ENCODE measurements at regions of chr17 and their contacts with region 1.

Region 1: DNA sequence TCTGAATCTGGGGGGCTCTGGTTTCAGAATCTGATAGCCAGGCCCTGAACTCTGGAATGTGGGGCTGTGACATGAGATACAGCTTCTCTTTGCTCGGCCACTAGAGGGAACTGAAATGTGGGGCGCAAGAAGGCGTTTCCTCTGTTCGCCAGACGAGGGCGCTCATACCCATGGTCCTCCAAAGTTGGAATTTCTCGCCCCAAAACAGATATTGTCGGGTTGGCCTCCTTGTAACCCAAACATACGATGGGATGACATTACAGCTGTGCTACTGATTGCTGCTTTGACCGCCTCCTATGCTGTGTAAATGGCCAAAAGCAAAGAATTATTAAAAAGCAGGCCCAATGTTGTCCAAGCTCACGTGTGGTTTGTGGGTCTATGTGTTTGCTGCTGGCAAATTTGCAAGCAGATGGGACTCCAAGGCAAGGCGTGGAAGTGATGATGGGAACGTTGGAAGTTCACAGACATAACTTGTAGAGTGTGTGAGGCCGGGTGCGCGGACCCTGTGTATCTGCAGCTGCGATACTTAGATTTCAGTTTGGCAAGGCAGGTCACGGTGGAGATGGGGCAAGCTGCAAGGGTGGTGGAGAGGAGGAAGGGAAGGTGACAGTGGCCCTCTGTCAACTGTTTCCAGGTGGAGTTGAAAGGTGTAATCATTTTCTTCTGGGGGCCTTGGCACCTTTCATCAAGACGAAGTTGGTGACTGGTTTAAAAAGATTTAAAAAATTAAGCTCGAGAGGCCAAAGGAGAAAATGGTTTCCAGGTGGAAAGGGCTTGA is 13.0 kb upstream of the MSI2 start:
- DNase-seq: peak; percentile 79
- H3K4me3 ChIP-seq: no peak overlapping the region
- H3K27ac ChIP-seq: no peak overlapping the region
- H3K4me1 ChIP-seq: peaks cover 6% of the 10 kb centered on the region
- H3K27me3 ChIP-seq: no peaks in the 10 kb centered on the region
- CTCF ChIP-seq: peak; percentile 100

Region 2: GRCh38 chr17:57255776-57256681 is 12.7 kb after region 1 on chr17 and contains the start of gene MSI2:
- CTCF ChIA-PET with region 1: interaction called, 13 read pairs
- POLR2A ChIA-PET with region 1: no interaction called
- intact Hi-C with region 1: no loop called
- DNase-seq: peak; percentile 93
- H3K4me3 ChIP-seq: peak within 1 kb of the TSS; percentile 89
- H3K27ac ChIP-seq: peak within 1 kb of the TSS; percentile 74
- H3K4me1 ChIP-seq: peaks cover 8% of the 10 kb centered on the region
- H3K27me3 ChIP-seq: no peaks in the 10 kb centered on the region
- CTCF ChIP-seq: 0 out of 2 replicates have a peak, but pooled peaks have one; percentile 10
- total RNA-seq, gene MSI2: 108 and 111 TPM in 2 replicates

Region 3: GRCh38 chr17:57518587-57519581 is 275.5 kb after region 1 on chr17:
- CTCF ChIA-PET with region 1: interaction called, 6 read pairs
- POLR2A ChIA-PET with region 1: no interaction called
- intact Hi-C with region 1: loop called (anchors 5 kb)
- DNase-seq: no peak
- H3K4me3 ChIP-seq: no peak overlapping the region
- H3K27ac ChIP-seq: no peak overlapping the region
- H3K4me1 ChIP-seq: peaks cover 35% of the 10 kb centered on the region
- H3K27me3 ChIP-seq: no peaks in the 10 kb centered on the region
- CTCF ChIP-seq: no peak

Region 4: DNA sequence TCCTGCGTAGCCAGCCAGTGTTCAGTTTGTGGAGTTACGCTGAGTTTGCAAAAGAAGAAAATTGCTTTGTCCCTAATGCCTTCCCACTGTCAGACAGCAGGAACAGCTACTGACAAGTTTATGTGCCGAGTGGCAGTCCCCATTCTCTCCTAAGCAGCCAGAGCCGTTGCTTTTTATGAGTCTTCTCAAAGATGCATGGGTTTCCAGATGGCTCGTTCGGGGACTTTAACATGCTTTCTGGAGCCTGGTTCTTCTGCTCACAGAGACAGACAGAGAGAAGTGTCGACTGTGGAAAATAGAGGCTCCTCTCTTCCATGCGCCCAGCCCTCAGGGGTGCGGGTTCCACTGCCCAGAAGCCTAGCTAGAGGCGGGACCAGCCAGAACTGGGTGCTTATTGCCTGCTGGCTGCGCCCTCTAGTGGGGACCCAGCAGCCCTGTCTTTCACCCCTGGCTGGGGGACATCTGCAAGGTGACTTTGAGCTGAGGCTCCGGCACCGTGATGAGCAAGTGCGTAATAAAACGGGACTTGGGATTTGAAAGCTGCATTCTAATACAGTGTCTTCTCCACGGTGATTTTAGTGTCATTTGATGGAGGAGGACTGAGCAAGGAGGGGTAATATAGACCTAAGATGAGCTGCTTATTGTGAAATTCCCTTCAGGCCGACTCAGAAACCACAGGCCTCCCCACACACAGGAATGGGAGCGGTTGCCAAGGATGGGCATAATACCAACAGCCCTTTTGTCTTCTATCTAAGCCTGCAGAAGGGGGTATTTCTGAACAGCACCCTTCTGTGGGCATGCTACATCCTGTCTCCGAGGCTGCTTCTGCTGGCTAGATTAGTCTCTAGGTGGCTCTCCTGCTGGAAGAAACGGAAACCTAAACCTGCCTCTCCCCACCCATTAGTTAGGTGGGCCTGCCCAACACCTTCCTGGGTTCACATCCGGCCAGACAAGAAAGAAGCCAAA is 428.6 kb after region 1 on chr17:
- CTCF ChIA-PET with region 1: interaction called, 51 read pairs
- POLR2A ChIA-PET with region 1: interaction called, 3 read pairs
- intact Hi-C with region 1: loop called (anchors 1 kb)
- DNase-seq: peak; percentile 82
- H3K4me3 ChIP-seq: no peak overlapping the region
- H3K27ac ChIP-seq: no peak overlapping the region
- H3K4me1 ChIP-seq: peaks cover 5% of the 10 kb centered on the region
- H3K27me3 ChIP-seq: no peaks in the 10 kb centered on the region
- CTCF ChIP-seq: peak; percentile 98

Region 5: GRCh38 chr17:57747221-57748017 is 504.1 kb after region 1 on chr17:
- CTCF ChIA-PET with region 1: interaction called, 17 read pairs
- POLR2A ChIA-PET with region 1: no interaction called
- intact Hi-C with region 1: loop called (anchors 1 kb)
- DNase-seq: peak; percentile 77
- H3K4me3 ChIP-seq: no peak overlapping the region
- H3K27ac ChIP-seq: no peak overlapping the region
- H3K4me1 ChIP-seq: no peaks in the 10 kb centered on the region
- H3K27me3 ChIP-seq: no peaks in the 10 kb centered on the region
- CTCF ChIP-seq: peak; percentile 90